ENCODE measurements at regions of chr5 and their contacts with region 1.

Region 1: GRCh38 chr5:35926389-35927051 is 11.9 kb downstream of the CAPSL start:
- DNase-seq: peak in 33 of 35 experiments; percentile 14 to 84 (median 51)
- ATAC-seq: peak; percentile 34 to 52 (median 42)
- H3K4me3 ChIP-seq: no peak overlapping the region
- H3K4me3 Mint-ChIP-seq: peak overlapping the region; percentile 50 to 79 (median 54)
- H3K27ac ChIP-seq: no peak overlapping the region
- H3K27ac Mint-ChIP-seq: peak overlapping the region in 1 of 2 donors; percentile 34
- H3K4me1 ChIP-seq: peaks cover 8 to 25% of the 10 kb centered on the region in 2 experiments
- H3K4me1 Mint-ChIP-seq: peaks cover 31 to 41% (median 40%) of the 10 kb centered on the region in 3 donors
- H3K27me3 ChIP-seq: peaks cover 0 to 3% of the 10 kb centered on the region in 2 experiments
- H3K27me3 Mint-ChIP-seq: peaks cover 0 to 7% of the 10 kb centered on the region in 2 donors

Region 2: GRCh38 chr5:35089334-35090314 is 836.9 kb before region 1 on chr5:
- CTCF ChIA-PET with region 1: interaction called, 8 to 14 read pairs
- POLR2A ChIA-PET with region 1: no interaction called
- DNase-seq: peak in 33 of 35 experiments; percentile 3 to 70 (median 35)
- ATAC-seq: peak in 2 of 4 experiments; percentile 30 to 48
- H3K4me3 ChIP-seq: no peak overlapping the region
- H3K4me3 Mint-ChIP-seq: no peak overlapping the region
- H3K27ac ChIP-seq: no peak overlapping the region
- H3K27ac Mint-ChIP-seq: no peak overlapping the region
- H3K4me1 ChIP-seq: no peaks in the 10 kb centered on the region
- H3K4me1 Mint-ChIP-seq: no peaks in the 10 kb centered on the region
- H3K27me3 ChIP-seq: peaks cover 0 to 6% of the 10 kb centered on the region in 2 experiments
- H3K27me3 Mint-ChIP-seq: peaks cover 0 to 7% of the 10 kb centered on the region in 2 donors

Region 3: GRCh38 chr5:35617435-35618303 is 308.9 kb before region 1 on chr5 and contains the start of gene SPEF2:
- CTCF ChIA-PET with region 1: interaction called, 21 to 34 read pairs
- POLR2A ChIA-PET with region 1: interaction called, 3 to 12 read pairs
- DNase-seq: peak; percentile 61 to 86 (median 71)
- ATAC-seq: peak; percentile 89 to 91 (median 90)
- H3K4me3 ChIP-seq: peak within 1 kb of the TSS; percentile 87 to 96
- H3K4me3 Mint-ChIP-seq: peak within 1 kb of the TSS; percentile 92 to 97 (median 96)
- H3K27ac ChIP-seq: peak within 1 kb of the TSS; percentile 71
- H3K27ac Mint-ChIP-seq: peak within 1 kb of the TSS; percentile 92 to 96
- H3K4me1 ChIP-seq: peaks cover 6 to 13% of the 10 kb centered on the region in 2 experiments
- H3K4me1 Mint-ChIP-seq: peaks cover 25 to 38% (median 29%) of the 10 kb centered on the region in 3 donors
- H3K27me3 ChIP-seq: peaks cover 0 to 6% of the 10 kb centered on the region in 2 experiments
- H3K27me3 Mint-ChIP-seq: peaks cover 0 to 4% of the 10 kb centered on the region in 2 donors
- total RNA-seq, gene SPEF2: 6.0 to 12.3 (median 11.3) TPM

Region 4: DNA sequence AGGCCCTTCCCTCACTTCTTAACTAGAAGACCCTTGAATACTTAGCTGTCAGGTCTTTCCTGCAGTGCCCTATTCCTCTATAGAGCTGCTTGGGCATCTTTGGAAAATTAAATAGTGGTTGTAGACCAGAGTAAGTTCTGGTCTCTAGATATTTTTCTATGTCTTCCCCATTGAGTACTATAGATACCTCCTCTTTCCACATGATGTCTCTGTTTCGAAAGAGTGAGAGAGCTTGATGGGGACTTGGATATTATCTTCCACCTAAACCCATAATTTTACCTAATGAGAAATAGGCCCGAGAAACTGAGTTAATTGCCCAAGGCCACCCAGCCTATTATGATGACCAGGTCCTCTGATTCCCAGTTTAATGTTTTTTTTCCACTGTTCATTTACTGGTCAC is 268.6 kb before region 1 on chr5:
- CTCF ChIA-PET with region 1: interaction called, 90 to 129 read pairs
- POLR2A ChIA-PET with region 1: no interaction called
- DNase-seq: peak in 1 of 35 experiments; percentile 30
- ATAC-seq: peak in 3 of 4 experiments; percentile 54 to 75 (median 58)
- H3K4me3 ChIP-seq: no peak overlapping the region
- H3K4me3 Mint-ChIP-seq: no peak overlapping the region
- H3K27ac ChIP-seq: no peak overlapping the region
- H3K27ac Mint-ChIP-seq: peak overlapping the region; percentile 41 to 62
- H3K4me1 ChIP-seq: peaks cover 0 to 8% of the 10 kb centered on the region in 2 experiments
- H3K4me1 Mint-ChIP-seq: peaks cover 19 to 24% (median 19%) of the 10 kb centered on the region in 3 donors
- H3K27me3 ChIP-seq: no peaks in the 10 kb centered on the region
- H3K27me3 Mint-ChIP-seq: no peaks in the 10 kb centered on the region

Region 5: GRCh38 chr5:35777358-35778087 is 149.0 kb before region 1 on chr5:
- CTCF ChIA-PET with region 1: interaction called, 27 to 83 read pairs
- POLR2A ChIA-PET with region 1: interaction called in 1 of 2 experiments, 4 read pairs
- DNase-seq: peak; percentile 39 to 91 (median 68)
- ATAC-seq: peak; percentile 41 to 67 (median 50)
- H3K4me3 ChIP-seq: peak overlapping the region in 1 of 2 donors; percentile 3
- H3K4me3 Mint-ChIP-seq: peak overlapping the region; percentile 33 to 65 (median 40)
- H3K27ac ChIP-seq: peak overlapping the region; percentile 58
- H3K27ac Mint-ChIP-seq: peak overlapping the region; percentile 89 to 95
- H3K4me1 ChIP-seq: peaks cover 16 to 37% of the 10 kb centered on the region in 2 experiments
- H3K4me1 Mint-ChIP-seq: peaks cover 73 to 77% (median 75%) of the 10 kb centered on the region in 3 donors
- H3K27me3 ChIP-seq: no peaks in the 10 kb centered on the region
- H3K27me3 Mint-ChIP-seq: no peaks in the 10 kb centered on the region

Region 6: GRCh38 chr5:35852084-35852734 is 74.3 kb before region 1 on chr5:
- CTCF ChIA-PET with region 1: interaction called in 1 of 2 experiments, 11 read pairs
- POLR2A ChIA-PET with region 1: interaction called in 1 of 2 experiments, 6 read pairs
- DNase-seq: peak in 16 of 35 experiments; percentile 4 to 76 (median 33)
- ATAC-seq: peak in 1 of 4 experiments; percentile 3
- H3K4me3 ChIP-seq: peak overlapping the region; percentile 18 to 83
- H3K4me3 Mint-ChIP-seq: peak overlapping the region; percentile 92 to 94 (median 92)
- H3K27ac ChIP-seq: peak overlapping the region; percentile 99
- H3K27ac Mint-ChIP-seq: peak overlapping the region; percentile 99 to 100
- H3K4me1 ChIP-seq: peaks cover 50 to 55% of the 10 kb centered on the region in 2 experiments
- H3K4me1 Mint-ChIP-seq: peaks cover 68 to 80% (median 79%) of the 10 kb centered on the region in 3 donors
- H3K27me3 ChIP-seq: no peaks in the 10 kb centered on the region
- H3K27me3 Mint-ChIP-seq: no peaks in the 10 kb centered on the region

Region 7: GRCh38 chr5:35881758-35882157 is 44.8 kb before region 1 on chr5:
- CTCF ChIA-PET with region 1: interaction called in 1 of 2 experiments, 20 read pairs
- POLR2A ChIA-PET with region 1: no interaction called
- DNase-seq: no peak
- ATAC-seq: peak in 3 of 4 experiments; percentile 14 to 23 (median 17)
- H3K4me3 ChIP-seq: no peak overlapping the region
- H3K4me3 Mint-ChIP-seq: no peak overlapping the region
- H3K27ac ChIP-seq: peak overlapping the region; percentile 22
- H3K27ac Mint-ChIP-seq: peak overlapping the region; percentile 6 to 50
- H3K4me1 ChIP-seq: peaks cover 23 to 30% of the 10 kb centered on the region in 2 experiments
- H3K4me1 Mint-ChIP-seq: peaks cover 63 to 70% (median 68%) of the 10 kb centered on the region in 3 donors
- H3K27me3 ChIP-seq: no peaks in the 10 kb centered on the region
- H3K27me3 Mint-ChIP-seq: no peaks in the 10 kb centered on the region

Region 8: DNA sequence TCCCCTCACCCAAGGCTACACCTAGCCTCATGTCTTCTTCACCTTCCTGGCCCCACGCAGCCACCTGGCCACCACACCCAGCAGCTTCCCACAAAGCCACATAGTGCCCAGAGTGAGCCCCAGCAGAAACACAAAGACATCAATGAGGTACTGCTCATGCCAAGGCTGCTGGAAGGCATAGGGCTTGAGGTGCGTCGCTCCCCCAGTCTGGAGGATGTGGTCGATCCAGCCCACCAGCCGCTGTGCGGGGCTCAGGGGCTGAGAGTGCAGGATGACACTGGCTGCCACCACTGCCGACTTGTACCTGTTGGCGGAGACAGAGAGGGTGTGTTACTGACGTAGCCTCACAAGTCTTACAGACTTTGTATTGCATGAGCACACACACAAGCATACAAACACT is 27.7 kb after region 1 on chr5:
- CTCF ChIA-PET with region 1: no interaction called
- POLR2A ChIA-PET with region 1: no interaction called
- DNase-seq: peak in 28 of 35 experiments; percentile 3 to 52 (median 15)
- ATAC-seq: peak; percentile 54 to 98 (median 66)
- H3K4me3 ChIP-seq: no peak overlapping the region
- H3K4me3 Mint-ChIP-seq: no peak overlapping the region
- H3K27ac ChIP-seq: no peak overlapping the region
- H3K27ac Mint-ChIP-seq: no peak overlapping the region
- H3K4me1 ChIP-seq: peaks cover 0 to 8% of the 10 kb centered on the region in 2 experiments
- H3K4me1 Mint-ChIP-seq: peaks cover 4 to 11% (median 10%) of the 10 kb centered on the region in 3 donors
- H3K27me3 ChIP-seq: peaks cover 0 to 10% of the 10 kb centered on the region in 2 experiments
- H3K27me3 Mint-ChIP-seq: peaks cover 36 to 50% of the 10 kb centered on the region in 2 donors

Region 9: GRCh38 chr5:36017004-36017403 is 90.5 kb after region 1 on chr5:
- CTCF ChIA-PET with region 1: no interaction called
- POLR2A ChIA-PET with region 1: no interaction called
- DNase-seq: no peak
- ATAC-seq: no peak
- H3K4me3 ChIP-seq: no peak overlapping the region
- H3K4me3 Mint-ChIP-seq: no peak overlapping the region
- H3K27ac ChIP-seq: no peak overlapping the region
- H3K27ac Mint-ChIP-seq: no peak overlapping the region
- H3K4me1 ChIP-seq: no peaks in the 10 kb centered on the region
- H3K4me1 Mint-ChIP-seq: no peaks in the 10 kb centered on the region
- H3K27me3 ChIP-seq: peaks cover 0 to 2% of the 10 kb centered on the region in 2 experiments
- H3K27me3 Mint-ChIP-seq: peaks cover 0 to 4% of the 10 kb centered on the region in 2 donors

Measured in T-cell (primary cell).